Colonic mucosa (tissue), 4 donors: ENCODE measurements at regions of chr12 and their contacts with region 1.

Region 1: DNA sequence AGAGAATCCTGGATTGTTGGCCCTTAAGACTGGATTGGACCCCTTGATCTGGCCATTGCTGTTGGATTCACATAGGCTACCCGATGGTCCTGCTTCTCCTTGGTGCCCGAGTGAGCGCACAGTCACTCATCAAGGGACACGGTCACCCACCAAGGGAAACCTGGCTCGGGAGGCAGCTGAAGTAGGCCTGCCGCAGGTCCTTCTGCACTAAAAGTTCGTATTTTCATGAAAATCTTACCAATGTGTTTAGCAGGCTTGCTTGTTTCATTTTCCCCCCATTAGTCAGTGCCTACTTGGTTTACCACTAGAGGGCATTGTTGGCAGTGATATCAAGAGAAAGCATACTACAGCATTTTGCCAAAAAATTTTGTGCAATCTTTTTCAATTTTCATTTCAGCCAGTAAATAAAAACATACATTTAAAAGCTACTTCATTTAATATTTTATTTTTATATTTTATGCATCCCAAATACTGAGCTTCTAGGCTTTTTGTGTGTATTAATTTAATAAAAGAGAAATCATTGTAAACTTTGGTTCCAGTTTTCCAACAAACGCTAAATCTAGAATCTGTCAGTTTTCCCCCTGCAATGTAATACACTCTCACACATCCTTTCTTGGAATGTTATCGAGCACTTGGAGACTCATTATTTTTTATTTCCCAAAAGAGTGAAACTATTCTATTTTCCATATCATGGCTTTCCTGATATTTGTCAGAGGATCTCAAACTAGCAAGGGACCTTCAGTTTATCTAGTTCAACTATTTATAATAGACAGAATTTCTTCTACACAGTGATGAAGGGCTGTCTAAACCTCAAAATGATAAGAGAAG is 116.7 kb downstream of the LMNTD1 start:
- DNase-seq: peak; percentile 52
- H3K4me3 ChIP-seq: no peak overlapping the region
- H3K27ac ChIP-seq: no peak overlapping the region
- H3K4me1 ChIP-seq: no peaks in the 10 kb centered on the region
- H3K27me3 ChIP-seq: no peaks in the 10 kb centered on the region
- CTCF ChIP-seq: peak; percentile 77

Region 2: GRCh38 chr12:25458047-25458552 is 21.7 kb after region 1 on chr12:
- intact Hi-C with region 1: no loop called
- DNase-seq: no peak
- H3K4me3 ChIP-seq: no peak overlapping the region
- H3K27ac ChIP-seq: no peak overlapping the region
- H3K4me1 ChIP-seq: no peaks in the 10 kb centered on the region
- H3K27me3 ChIP-seq: no peaks in the 10 kb centered on the region
- CTCF ChIP-seq: no peak

Region 3: GRCh38 chr12:25958428-25959070 is 522.1 kb after region 1 on chr12 and contains the start of gene RASSF8:
- intact Hi-C with region 1: loop called (anchors 10 kb)
- DNase-seq: peak; percentile 49
- H3K4me3 ChIP-seq: peak within 1 kb of the TSS; percentile 52
- H3K27ac ChIP-seq: peak within 1 kb of the TSS; percentile 77
- H3K4me1 ChIP-seq: no peaks in the 10 kb centered on the region
- H3K27me3 ChIP-seq: peaks cover 16% of the 10 kb centered on the region
- CTCF ChIP-seq: no peak
- total RNA-seq, gene RASSF8: 3.2 to 14.2 TPM

Region 4: DNA sequence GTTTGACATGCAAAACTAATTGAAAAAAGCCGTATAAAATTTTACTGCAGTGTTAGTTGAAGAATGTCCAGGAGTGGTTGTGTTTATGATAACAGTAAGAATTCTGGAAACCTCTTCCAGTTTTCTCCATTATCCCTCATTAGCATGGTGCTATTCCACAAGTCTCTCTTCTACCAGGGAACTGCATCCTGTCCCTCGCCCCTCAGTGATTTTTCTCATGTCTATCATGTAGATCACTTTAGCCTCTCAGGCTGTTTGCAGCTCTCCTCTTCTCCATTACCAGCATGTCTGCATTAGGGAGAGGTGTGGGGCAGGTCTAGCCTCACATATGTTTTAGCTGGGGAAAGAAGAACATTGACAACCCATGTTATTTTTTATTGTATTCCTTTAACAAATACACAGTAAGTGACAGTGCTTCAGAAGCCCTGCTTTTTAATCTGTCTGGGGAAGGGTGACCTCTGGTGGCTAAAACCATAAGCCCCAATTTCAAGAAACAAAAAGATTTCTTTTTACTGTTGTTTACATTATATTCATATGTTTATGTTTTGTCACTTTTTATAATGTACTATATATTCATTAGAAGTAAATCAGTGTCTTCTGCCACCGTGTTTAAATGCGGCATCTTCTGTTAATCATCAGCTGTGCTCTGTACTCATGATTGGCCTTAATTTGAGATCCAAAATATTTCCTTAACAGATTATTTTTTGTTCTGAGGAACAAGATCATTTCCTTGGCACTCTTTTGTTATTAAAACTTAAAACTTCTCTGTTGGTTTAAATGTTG is 592.7 kb after region 1 on chr12:
- intact Hi-C with region 1: loop called (anchors 5 kb)
- DNase-seq: peak; percentile 31
- H3K4me3 ChIP-seq: no peak overlapping the region
- H3K27ac ChIP-seq: no peak overlapping the region
- H3K4me1 ChIP-seq: no peaks in the 10 kb centered on the region
- H3K27me3 ChIP-seq: no peaks in the 10 kb centered on the region
- CTCF ChIP-seq: peak; percentile 65